ENCODE measurements at regions of chr4 and their contacts with region 1.

Region 1: DNA sequence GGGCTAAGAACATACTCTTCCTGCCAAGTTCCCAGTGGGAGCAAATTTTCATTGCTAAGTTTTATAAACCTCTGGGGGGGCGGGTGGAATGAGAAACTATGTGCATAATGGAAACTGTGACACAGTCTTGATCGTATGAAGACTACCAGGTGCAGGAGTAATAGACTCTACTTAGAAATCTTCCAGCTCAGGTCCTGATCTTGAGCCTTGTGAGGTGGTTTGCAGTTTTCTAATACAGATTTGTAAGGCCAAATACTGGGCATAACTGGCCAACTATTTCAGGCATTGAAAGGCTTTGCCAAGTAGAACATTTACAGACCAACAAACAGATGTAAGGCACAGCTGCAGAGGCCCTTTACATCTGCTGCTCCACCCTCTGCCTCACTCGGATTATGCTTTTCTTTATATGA is 89.7 kb upstream of the CBR4 start:
- DNase-seq: no peak
- ATAC-seq: peak; percentile 63
- H3K4me3 ChIP-seq: no peak overlapping the region
- H3K27ac ChIP-seq: peak overlapping the region; percentile 45 to 86
- H3K4me1 ChIP-seq: peaks cover 7 to 9% of the 10 kb centered on the region in 2 donors
- H3K27me3 ChIP-seq: no peaks in the 10 kb centered on the region

Region 2: GRCh38 chr4:169059306-169060211 is 40.2 kb before region 1 on chr4:
- intact Hi-C with region 1: loop called in 1 of 2 experiments (anchors 5 kb)
- DNase-seq: peak in 1 of 2 donors; percentile 51
- ATAC-seq: peak; percentile 66
- H3K4me3 ChIP-seq: no peak overlapping the region
- H3K27ac ChIP-seq: peak overlapping the region; percentile 54 to 94
- H3K4me1 ChIP-seq: peaks cover 3 to 10% of the 10 kb centered on the region in 2 donors
- H3K27me3 ChIP-seq: no peaks in the 10 kb centered on the region